ENCODE measurements at regions of chr14 and their contacts with region 1.

Region 1: GRCh38 chr14:99271951-99272631 is at the start of gene BCL11B:
- DNase-seq: peak; percentile 76 to 93 (median 88)
- H3K4me3 ChIP-seq: peak within 1 kb of the TSS; percentile 62
- H3K4me3 Mint-ChIP-seq: peak within 1 kb of the TSS; percentile 93 to 100 (median 97)
- H3K27ac ChIP-seq: peak within 1 kb of the TSS; percentile 83
- H3K27ac Mint-ChIP-seq: peak within 1 kb of the TSS; percentile 87 to 99 (median 96)
- H3K4me1 ChIP-seq: peaks cover 14% of the 10 kb centered on the region
- H3K4me1 Mint-ChIP-seq: peaks cover 25 to 37% (median 33%) of the 10 kb centered on the region in 3 donors
- H3K27me3 ChIP-seq: no peaks in the 10 kb centered on the region
- H3K27me3 Mint-ChIP-seq: peaks cover 0 to 9% of the 10 kb centered on the region in 2 donors
- total RNA-seq, gene BCL11B: 42.0 to 42.5 TPM

Region 2: DNA sequence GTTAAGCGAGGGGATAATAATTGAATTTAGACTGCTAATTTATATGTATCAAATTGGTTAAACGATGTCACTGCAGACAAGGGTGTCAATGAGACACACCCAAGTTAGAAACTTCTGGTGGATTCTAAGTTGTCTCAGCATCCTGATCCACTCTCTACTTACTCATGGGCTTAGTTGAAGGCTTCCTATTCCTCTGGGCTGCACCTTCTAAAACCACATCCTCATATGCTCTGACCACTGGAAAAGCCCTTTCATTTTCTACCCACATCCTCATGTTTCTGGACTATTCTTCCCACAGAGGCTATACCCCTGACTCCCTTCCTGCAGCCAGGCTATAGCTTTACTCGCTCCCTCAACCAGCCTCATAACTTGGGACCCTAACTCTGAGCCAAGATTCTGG is 1981.1 kb before region 1 on chr14:
- CTCF ChIA-PET with region 1: no interaction called
- POLR2A ChIA-PET with region 1: interaction called, 13 read pairs
- DNase-seq: no peak
- H3K4me3 ChIP-seq: no peak overlapping the region
- H3K4me3 Mint-ChIP-seq: no peak overlapping the region
- H3K27ac ChIP-seq: no peak overlapping the region
- H3K27ac Mint-ChIP-seq: peak overlapping the region in 1 of 8 donors; percentile 12
- H3K4me1 ChIP-seq: peaks cover 3% of the 10 kb centered on the region
- H3K4me1 Mint-ChIP-seq: peaks cover 16 to 20% (median 19%) of the 10 kb centered on the region in 3 donors
- H3K27me3 ChIP-seq: no peaks in the 10 kb centered on the region
- H3K27me3 Mint-ChIP-seq: peaks cover 19 to 25% of the 10 kb centered on the region in 2 donors

Region 3: GRCh38 chr14:97978341-97978740 is 1293.8 kb before region 1 on chr14:
- CTCF ChIA-PET with region 1: interaction called, 22 read pairs
- POLR2A ChIA-PET with region 1: interaction called, 7 read pairs
- DNase-seq: peak; percentile 56 to 82 (median 65)
- H3K4me3 ChIP-seq: peak overlapping the region; percentile 56
- H3K4me3 Mint-ChIP-seq: peak overlapping the region; percentile 86 to 98 (median 89)
- H3K27ac ChIP-seq: peak overlapping the region; percentile 52
- H3K27ac Mint-ChIP-seq: peak overlapping the region; percentile 66 to 99 (median 92)
- H3K4me1 ChIP-seq: peaks cover 53% of the 10 kb centered on the region
- H3K4me1 Mint-ChIP-seq: peaks cover 55 to 64% (median 58%) of the 10 kb centered on the region in 3 donors
- H3K27me3 ChIP-seq: no peaks in the 10 kb centered on the region
- H3K27me3 Mint-ChIP-seq: peaks cover 0 to 1% of the 10 kb centered on the region in 2 donors

Region 4: GRCh38 chr14:98138666-98139065 is 1133.4 kb before region 1 on chr14:
- CTCF ChIA-PET with region 1: interaction called, 71 read pairs
- POLR2A ChIA-PET with region 1: interaction called, 4 read pairs
- DNase-seq: peak; percentile 37 to 82 (median 62)
- H3K4me3 ChIP-seq: peak overlapping the region; percentile 37
- H3K4me3 Mint-ChIP-seq: peak overlapping the region; percentile 70 to 85 (median 77)
- H3K27ac ChIP-seq: no peak overlapping the region
- H3K27ac Mint-ChIP-seq: peak overlapping the region; percentile 40 to 94 (median 84)
- H3K4me1 ChIP-seq: peaks cover 84% of the 10 kb centered on the region
- H3K4me1 Mint-ChIP-seq: peaks cover 79 to 97% (median 92%) of the 10 kb centered on the region in 3 donors
- H3K27me3 ChIP-seq: no peaks in the 10 kb centered on the region
- H3K27me3 Mint-ChIP-seq: no peaks in the 10 kb centered on the region

Region 5: GRCh38 chr14:98175436-98175835 is 1096.7 kb before region 1 on chr14:
- CTCF ChIA-PET with region 1: interaction called, 5 read pairs
- POLR2A ChIA-PET with region 1: interaction called, 10 read pairs
- DNase-seq: peak in 1 of 5 donors; percentile 53
- H3K4me3 ChIP-seq: peak overlapping the region; percentile 20
- H3K4me3 Mint-ChIP-seq: peak overlapping the region; percentile 19 to 82 (median 54)
- H3K27ac ChIP-seq: no peak overlapping the region
- H3K27ac Mint-ChIP-seq: peak overlapping the region; percentile 88 to 99 (median 93)
- H3K4me1 ChIP-seq: peaks cover 95% of the 10 kb centered on the region
- H3K4me1 Mint-ChIP-seq: peaks cover 86 to 99% (median 95%) of the 10 kb centered on the region in 3 donors
- H3K27me3 ChIP-seq: no peaks in the 10 kb centered on the region
- H3K27me3 Mint-ChIP-seq: no peaks in the 10 kb centered on the region

Region 6: GRCh38 chr14:99230208-99231151 is 41.6 kb before region 1 on chr14:
- CTCF ChIA-PET with region 1: interaction called, 532 read pairs
- POLR2A ChIA-PET with region 1: interaction called, 25 read pairs
- DNase-seq: peak; percentile 82 to 95 (median 89)
- H3K4me3 ChIP-seq: peak overlapping the region; percentile 39
- H3K4me3 Mint-ChIP-seq: peak overlapping the region; percentile 76 to 94 (median 84)
- H3K27ac ChIP-seq: peak overlapping the region; percentile 68
- H3K27ac Mint-ChIP-seq: peak overlapping the region; percentile 97 to 100 (median 99)
- H3K4me1 ChIP-seq: peaks cover 97% of the 10 kb centered on the region
- H3K4me1 Mint-ChIP-seq: peaks cover 95 to 98% (median 95%) of the 10 kb centered on the region in 3 donors
- H3K27me3 ChIP-seq: no peaks in the 10 kb centered on the region
- H3K27me3 Mint-ChIP-seq: peaks cover 0 to 7% of the 10 kb centered on the region in 2 donors

Region 7: DNA sequence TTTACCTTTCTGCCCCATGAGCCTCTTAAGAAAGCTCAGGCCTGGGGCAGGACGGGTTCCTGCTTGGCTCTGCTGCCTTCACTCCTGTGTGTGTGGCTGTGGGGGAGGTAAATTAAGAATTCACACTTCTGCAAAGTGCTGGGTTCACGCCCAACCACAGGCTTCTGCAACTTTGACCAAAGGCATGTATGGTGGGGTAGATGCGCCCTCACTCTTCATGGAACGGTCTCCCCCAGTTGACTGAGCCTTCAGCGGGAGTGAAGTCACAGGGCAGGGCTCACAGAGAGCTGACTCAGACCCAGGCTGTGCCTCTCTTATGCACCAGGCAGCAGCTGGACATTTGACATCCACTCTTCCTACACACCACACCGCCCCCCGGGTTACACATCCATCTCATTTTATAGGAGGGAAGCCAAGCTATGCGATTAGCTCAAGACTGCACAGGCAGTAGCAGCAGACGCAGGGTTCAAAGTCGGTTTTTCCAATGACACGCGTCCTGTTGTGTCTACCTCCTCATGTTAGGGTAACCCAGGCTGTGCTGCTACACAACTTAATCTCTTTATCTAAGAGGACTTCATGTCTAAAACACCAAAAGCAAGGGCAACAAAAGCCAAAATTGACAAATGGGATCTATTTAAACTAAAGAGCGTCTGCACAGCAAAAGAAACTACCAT is 15.3 kb after region 1 on chr14:
- CTCF ChIA-PET with region 1: interaction called, 23 read pairs
- POLR2A ChIA-PET with region 1: interaction called, 6 read pairs
- DNase-seq: peak in 3 of 5 donors; percentile 31 to 63 (median 54)
- H3K4me3 ChIP-seq: peak overlapping the region; percentile 15
- H3K4me3 Mint-ChIP-seq: peak overlapping the region; percentile 75 to 96 (median 85)
- H3K27ac ChIP-seq: peak overlapping the region; percentile 43
- H3K27ac Mint-ChIP-seq: peak overlapping the region; percentile 77 to 96 (median 89)
- H3K4me1 ChIP-seq: peaks cover 13% of the 10 kb centered on the region
- H3K4me1 Mint-ChIP-seq: peaks cover 30 to 40% (median 35%) of the 10 kb centered on the region in 3 donors
- H3K27me3 ChIP-seq: no peaks in the 10 kb centered on the region
- H3K27me3 Mint-ChIP-seq: peaks cover 2 to 3% of the 10 kb centered on the region in 2 donors